PC-3 (cell line): ENCODE measurements at regions of chr4 and their contacts with region 1.

Region 1: DNA sequence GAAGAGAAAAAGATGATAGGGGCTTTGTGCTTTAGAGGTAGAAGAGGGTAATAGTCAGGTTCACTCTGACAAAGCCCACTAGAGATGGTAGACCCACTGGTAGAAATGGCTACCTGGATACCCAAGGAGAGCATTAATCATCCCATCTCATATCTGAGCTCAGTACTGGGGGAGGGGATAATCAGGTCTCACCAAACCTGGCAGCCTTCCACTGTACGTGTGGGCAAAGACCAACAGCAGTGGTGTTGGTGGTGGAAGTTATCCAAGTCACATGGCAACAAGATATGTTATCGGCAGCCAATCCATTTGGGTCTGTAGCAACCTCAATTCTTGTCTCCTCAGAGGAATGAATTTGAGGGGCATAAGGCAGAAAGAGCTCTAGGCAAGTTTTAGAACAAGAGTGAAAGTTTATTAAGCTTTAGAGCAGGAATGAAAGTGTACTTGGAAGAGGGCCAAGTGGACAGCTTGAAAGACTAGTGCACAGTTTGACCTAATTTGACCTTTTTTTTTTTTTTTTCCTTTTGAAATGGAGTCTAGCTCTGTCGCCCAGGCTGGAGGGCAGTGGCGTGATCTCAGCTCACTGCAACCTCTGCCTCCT is 67.0 kb upstream of the CXCL13 start:
- DNase-seq: peak; percentile 71
- ATAC-seq: peak; percentile 49
- H3K4me3 ChIP-seq: peak overlapping the region; percentile 31; the same call in 1 of the 2 replicates
- H3K27ac ChIP-seq: peak overlapping the region; percentile 88
- H3K4me1 ChIP-seq: peaks cover 22% of the 10 kb centered on the region
- H3K27me3 ChIP-seq: no peaks in the 10 kb centered on the region
- CTCF ChIP-seq: no peak

Region 2: DNA sequence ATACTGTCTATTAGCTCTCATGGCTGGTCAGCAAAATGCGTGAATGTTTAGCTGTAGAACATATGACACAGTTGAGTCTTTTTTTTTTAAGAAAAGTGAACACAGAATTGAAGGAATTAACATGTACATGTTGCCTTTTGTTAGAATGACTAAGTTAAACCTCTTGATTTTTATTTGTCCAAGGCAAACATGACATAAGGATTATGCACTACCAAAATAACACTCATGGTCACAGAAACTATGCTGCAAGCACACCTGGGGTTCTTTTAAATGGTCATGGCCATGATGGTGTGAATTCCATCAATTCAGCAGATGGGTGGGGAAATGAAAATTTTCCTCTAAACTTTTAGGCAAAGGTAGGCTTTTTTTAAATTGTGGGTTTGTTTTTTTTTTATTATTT is 13.1 kb before region 1 on chr4:
- CTCF ChIA-PET with region 1: interaction called, 3 read pairs
- POLR2A ChIA-PET with region 1: interaction called, 11 read pairs
- intact Hi-C with region 1: loop called (anchors 1 kb)
- DNase-seq: peak; percentile 67
- ATAC-seq: peak; percentile 87
- H3K4me3 ChIP-seq: no peak overlapping the region
- H3K27ac ChIP-seq: peak overlapping the region; percentile 68
- H3K4me1 ChIP-seq: peaks cover 22% of the 10 kb centered on the region
- H3K27me3 ChIP-seq: no peaks in the 10 kb centered on the region
- CTCF ChIP-seq: no peak

Region 3: GRCh38 chr4:77579406-77580076 is 40.9 kb after region 1 on chr4:
- CTCF ChIA-PET with region 1: interaction called, 4 read pairs
- POLR2A ChIA-PET with region 1: no interaction called
- intact Hi-C with region 1: loop called (anchors 1 kb)
- DNase-seq: peak; percentile 83
- ATAC-seq: peak; percentile 96
- H3K4me3 ChIP-seq: peak overlapping the region; percentile 23
- H3K27ac ChIP-seq: peak overlapping the region; percentile 93
- H3K4me1 ChIP-seq: peaks cover 40% of the 10 kb centered on the region
- H3K27me3 ChIP-seq: no peaks in the 10 kb centered on the region
- CTCF ChIP-seq: no peak

Region 4: GRCh38 chr4:77600521-77601451 is 62.1 kb after region 1 on chr4:
- CTCF ChIA-PET with region 1: interaction called, 6 read pairs
- POLR2A ChIA-PET with region 1: no interaction called
- intact Hi-C with region 1: loop called (anchors 5 kb)
- DNase-seq: peak; percentile 58
- ATAC-seq: peak; percentile 65
- H3K4me3 ChIP-seq: no peak overlapping the region
- H3K27ac ChIP-seq: no peak overlapping the region
- H3K4me1 ChIP-seq: no peaks in the 10 kb centered on the region
- H3K27me3 ChIP-seq: peaks cover 27% of the 10 kb centered on the region
- CTCF ChIP-seq: peak; percentile 84

Region 5: GRCh38 chr4:77618383-77619122 is 79.9 kb after region 1 on chr4:
- CTCF ChIA-PET with region 1: interaction called, 10 read pairs
- POLR2A ChIA-PET with region 1: no interaction called
- intact Hi-C with region 1: no loop called
- DNase-seq: peak; percentile 83
- ATAC-seq: peak; percentile 95
- H3K4me3 ChIP-seq: no peak overlapping the region; the same call in 1 of the 2 replicates
- H3K27ac ChIP-seq: no peak overlapping the region
- H3K4me1 ChIP-seq: peaks cover 8% of the 10 kb centered on the region; the same call in 1 of the 2 replicates
- H3K27me3 ChIP-seq: no peaks in the 10 kb centered on the region; the same call in 1 of the 2 replicates
- CTCF ChIP-seq: peak; percentile 83